Ascending aorta (tissue), 2 donors: ENCODE measurements at regions of chr2 and their contacts with region 1.

Region 1: GRCh38 chr2:56183643-56184499 is at the start of gene CCDC85A:
- DNase-seq: peak; percentile 24 to 91
- H3K4me3 ChIP-seq: peak within 1 kb of the TSS; percentile 66 to 75
- H3K27ac ChIP-seq: peak within 1 kb of the TSS; percentile 13 to 29
- H3K4me1 ChIP-seq: peaks cover 0 to 4% of the 10 kb centered on the region in 2 donors
- H3K27me3 ChIP-seq: no peaks in the 10 kb centered on the region
- CTCF ChIP-seq: peak; percentile 69 to 97 (median 93)
- total RNA-seq, gene CCDC85A: 15.0 TPM

Region 2: DNA sequence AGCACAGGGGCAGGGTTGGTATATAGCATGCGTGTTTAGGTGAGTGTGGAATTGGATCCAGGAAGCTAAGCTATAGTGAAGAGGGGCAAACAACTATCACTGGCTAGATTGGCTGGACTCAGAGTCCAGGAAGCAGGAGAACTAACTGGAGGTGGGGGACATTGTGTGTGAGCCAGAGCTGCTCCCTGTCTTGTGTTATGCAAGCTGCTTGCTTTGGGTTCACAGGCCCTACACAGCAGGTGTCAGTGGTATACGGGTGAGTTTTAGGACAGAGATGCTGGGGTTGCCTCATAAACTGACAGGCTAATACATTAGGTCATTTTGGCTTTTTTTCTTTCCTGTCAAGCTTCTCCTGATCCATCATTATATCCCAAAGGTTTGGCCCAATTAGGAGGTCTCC is 87.4 kb after region 1 on chr2:
- intact Hi-C with region 1: no loop called
- DNase-seq: no peak
- H3K4me3 ChIP-seq: no peak overlapping the region
- H3K27ac ChIP-seq: no peak overlapping the region
- H3K4me1 ChIP-seq: no peaks in the 10 kb centered on the region
- H3K27me3 ChIP-seq: no peaks in the 10 kb centered on the region
- CTCF ChIP-seq: no peak

Region 3: DNA sequence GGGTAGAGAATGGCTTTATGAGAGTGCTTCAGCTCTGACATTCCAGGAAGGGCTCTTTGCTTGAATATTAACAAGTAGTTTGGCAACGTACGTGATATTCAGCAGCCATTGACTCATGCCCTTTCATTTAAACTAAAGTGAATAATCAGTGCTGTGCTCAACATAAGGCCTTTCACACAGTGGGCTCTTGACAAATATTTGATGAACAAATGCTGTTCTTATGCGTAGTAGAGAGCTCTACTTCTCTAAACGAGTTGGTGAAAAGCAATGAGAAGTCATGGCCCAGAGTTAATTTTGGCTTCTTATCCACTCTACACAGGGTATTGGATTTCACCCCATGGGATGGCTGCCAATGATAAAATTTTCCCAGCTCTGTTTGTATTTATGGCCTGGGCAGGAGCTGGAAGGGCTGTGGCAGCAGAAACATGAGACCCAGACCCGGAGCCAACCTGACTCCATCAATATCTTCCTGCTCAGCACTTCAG is 338.8 kb after region 1 on chr2:
- intact Hi-C with region 1: loop called (anchors 10 kb)
- DNase-seq: no peak
- H3K4me3 ChIP-seq: no peak overlapping the region
- H3K27ac ChIP-seq: peak overlapping the region in 1 of 2 donors; percentile 23
- H3K4me1 ChIP-seq: peaks cover 0 to 4% of the 10 kb centered on the region in 2 donors
- H3K27me3 ChIP-seq: no peaks in the 10 kb centered on the region
- CTCF ChIP-seq: no peak

Region 4: DNA sequence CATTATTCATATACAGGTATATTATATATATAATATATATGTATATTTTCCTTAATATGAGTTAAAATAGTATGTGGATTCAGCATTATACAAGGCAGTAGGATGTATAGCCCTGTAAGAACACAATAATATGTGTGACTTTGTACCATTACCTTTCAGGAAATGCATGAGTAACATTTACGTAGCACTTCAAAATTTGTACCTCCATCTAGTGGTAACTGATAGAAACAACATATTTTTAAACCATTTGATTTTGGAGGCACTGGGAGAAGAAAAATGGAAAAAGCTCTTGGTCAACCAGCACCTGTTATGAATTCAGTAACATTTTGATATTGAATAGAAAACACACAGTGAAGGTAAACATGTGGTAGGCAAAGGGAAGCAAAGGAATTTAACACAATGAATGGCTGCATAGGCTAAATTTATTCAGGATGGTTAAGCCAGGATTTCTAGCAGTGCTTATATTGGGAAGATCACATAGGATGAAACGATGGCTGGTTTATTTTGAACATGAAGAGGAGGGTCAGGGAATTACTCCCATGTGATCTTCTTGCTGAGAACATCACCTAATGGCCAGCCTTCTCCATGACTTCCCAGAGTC is 565.4 kb after region 1 on chr2:
- intact Hi-C with region 1: loop called (anchors 1 kb)
- DNase-seq: no peak
- H3K4me3 ChIP-seq: no peak overlapping the region
- H3K27ac ChIP-seq: no peak overlapping the region
- H3K4me1 ChIP-seq: no peaks in the 10 kb centered on the region
- H3K27me3 ChIP-seq: no peaks in the 10 kb centered on the region
- CTCF ChIP-seq: peak in 2 of 3 experiments; percentile 27 to 50

Region 5: GRCh38 chr2:57516698-57517340 is 1332.9 kb after region 1 on chr2:
- intact Hi-C with region 1: loop called (anchors 5 kb)
- DNase-seq: no peak
- H3K4me3 ChIP-seq: no peak overlapping the region
- H3K27ac ChIP-seq: no peak overlapping the region
- H3K4me1 ChIP-seq: no peaks in the 10 kb centered on the region
- H3K27me3 ChIP-seq: no peaks in the 10 kb centered on the region
- CTCF ChIP-seq: peak; percentile 17 to 57 (median 43)